ENCODE measurements at regions of chr4 and their contacts with region 1.

Region 1: DNA sequence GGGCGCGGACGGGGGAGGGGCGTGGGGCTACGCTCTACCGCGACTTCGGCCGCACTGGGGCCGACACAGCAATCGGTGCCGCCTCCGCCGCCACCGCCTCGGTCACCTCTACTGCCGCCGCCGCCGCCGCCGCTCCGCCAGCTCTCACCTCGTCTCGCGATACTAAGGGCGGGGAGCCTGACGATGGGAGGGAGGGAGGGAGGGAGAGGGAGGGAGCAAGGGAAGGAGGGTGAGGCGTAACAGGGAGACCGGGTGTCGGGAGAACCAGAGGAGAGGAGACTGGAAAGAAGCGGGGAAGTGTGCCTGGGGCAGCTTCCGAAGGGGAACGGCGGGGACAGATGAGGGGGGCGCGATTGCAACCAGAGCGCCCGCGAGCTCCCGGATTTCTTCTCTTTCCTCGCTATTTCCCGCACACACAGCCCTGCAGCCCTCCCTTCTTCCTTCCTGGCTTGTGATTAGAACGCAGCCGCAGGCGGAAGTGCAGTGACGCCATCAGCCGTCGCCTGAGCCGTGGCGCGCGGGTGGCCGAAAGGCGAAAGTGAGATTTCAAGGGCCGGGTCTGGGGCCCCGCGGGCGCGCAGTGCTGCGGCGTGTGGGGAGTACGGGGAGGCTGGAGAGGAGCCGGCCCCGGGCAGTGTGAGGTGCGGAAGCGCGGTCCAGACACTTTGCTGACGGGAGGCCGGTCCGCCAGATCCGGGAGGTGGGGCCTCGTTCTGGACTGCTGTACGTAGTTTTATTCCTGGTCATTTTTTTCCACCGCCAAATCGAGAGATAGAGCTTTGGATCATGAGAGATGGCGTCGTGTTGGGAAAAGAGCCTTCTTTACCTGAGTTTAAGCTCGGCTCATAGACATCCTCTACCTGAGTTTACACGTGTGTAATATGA is at the start of gene ANKRD17:
- DNase-seq: peak; percentile 97
- H3K4me3 ChIP-seq: peak within 1 kb of the TSS; percentile 80 to 98 (median 86)
- H3K27ac ChIP-seq: peak within 1 kb of the TSS; percentile 94 to 98 (median 96)
- H3K4me1 ChIP-seq: peaks cover 46 to 58% (median 54%) of the 10 kb centered on the region in 4 donors
- H3K27me3 ChIP-seq: no peaks in the 10 kb centered on the region
- CTCF ChIP-seq: peak in 2 of 3 experiments; percentile 16 to 43
- EP300 ChIP-seq: peak; percentile 17
- POLR2A ChIP-seq: peak; percentile 61
- total RNA-seq, gene ANKRD17: 47.9 to 58.1 (median 54.7) TPM

Region 2: DNA sequence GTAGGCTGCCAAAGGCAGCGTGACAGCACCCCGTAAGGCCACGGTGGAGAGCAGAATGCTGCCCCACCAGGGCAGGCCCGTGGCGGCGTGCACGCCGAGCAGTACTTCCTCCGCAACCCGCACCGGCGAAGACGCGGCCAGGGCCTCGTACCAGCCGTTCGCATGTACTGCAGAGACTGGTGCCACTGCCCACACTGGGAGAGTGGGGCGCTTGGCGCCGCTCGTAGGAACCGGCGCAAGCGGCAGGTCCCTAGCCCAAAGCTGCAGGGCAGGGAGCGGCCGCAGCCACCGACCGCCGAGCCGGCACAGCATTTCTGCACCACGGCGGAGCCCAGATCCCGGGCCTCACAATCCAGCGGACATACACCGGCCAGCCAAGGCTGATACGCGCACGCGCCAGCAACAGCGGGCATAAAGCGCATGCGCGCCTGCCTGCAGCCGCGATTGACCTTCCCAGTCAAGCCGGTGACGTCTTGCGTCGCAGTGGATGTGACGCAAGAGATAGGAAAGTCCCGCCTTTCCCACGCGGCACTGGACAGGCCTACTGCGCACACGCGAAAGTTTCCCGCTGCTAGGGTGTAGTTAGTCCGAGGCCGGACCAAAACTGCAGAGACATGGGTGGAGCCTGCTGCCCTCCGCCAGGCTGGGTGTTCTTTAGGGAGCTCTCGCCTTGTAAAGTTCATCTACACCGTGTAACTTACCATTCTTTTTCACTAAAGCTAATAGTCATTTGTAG is 189.4 kb before region 1 on chr4 and contains the start of gene COX18:
- intact Hi-C with region 1: loop called (anchors 2 kb)
- DNase-seq: peak; percentile 99
- H3K4me3 ChIP-seq: peak within 1 kb of the TSS; percentile 72 to 91 (median 82)
- H3K27ac ChIP-seq: peak within 1 kb of the TSS; percentile 91 to 97 (median 95)
- H3K4me1 ChIP-seq: peaks cover 0 to 29% (median 28%) of the 10 kb centered on the region in 4 donors
- H3K27me3 ChIP-seq: no peaks in the 10 kb centered on the region
- CTCF ChIP-seq: peak in 1 of 3 experiments; percentile 4
- EP300 ChIP-seq: no peak
- POLR2A ChIP-seq: peak; percentile 78
- total RNA-seq, gene COX18: 10.4 to 19.0 (median 12.9) TPM

Region 3: GRCh38 chr4:73142995-73143547 is 115.9 kb before region 1 on chr4:
- intact Hi-C with region 1: loop called (anchors 5 kb)
- DNase-seq: no peak
- H3K4me3 ChIP-seq: no peak overlapping the region
- H3K27ac ChIP-seq: no peak overlapping the region
- H3K4me1 ChIP-seq: no peaks in the 10 kb centered on the region
- H3K27me3 ChIP-seq: no peaks in the 10 kb centered on the region
- CTCF ChIP-seq: peak in 1 of 3 experiments; percentile 16
- EP300 ChIP-seq: no peak
- POLR2A ChIP-seq: no peak

Region 4: DNA sequence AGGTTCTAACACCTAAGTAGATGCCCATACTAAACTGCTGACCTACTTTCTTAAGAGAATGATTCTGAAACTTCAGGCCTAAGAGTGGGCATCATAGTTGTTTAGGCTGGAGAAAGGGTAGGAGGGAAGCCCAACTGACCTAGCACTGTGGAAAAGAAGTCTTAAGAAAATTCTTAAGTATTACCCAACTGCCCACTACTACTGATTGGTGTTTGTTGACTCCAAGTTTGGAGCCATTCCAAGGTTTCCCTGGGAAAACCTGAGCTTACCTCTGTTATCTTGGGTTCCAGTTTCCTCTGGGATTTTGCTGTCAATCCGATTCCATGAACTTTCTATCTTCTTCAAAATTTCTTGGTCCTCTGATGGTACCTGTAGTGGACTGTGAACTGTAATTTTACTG is 24.2 kb before region 1 on chr4:
- intact Hi-C with region 1: no loop called
- DNase-seq: no peak
- H3K4me3 ChIP-seq: no peak overlapping the region
- H3K27ac ChIP-seq: no peak overlapping the region
- H3K4me1 ChIP-seq: peaks cover 0 to 23% (median 16%) of the 10 kb centered on the region in 4 donors
- H3K27me3 ChIP-seq: no peaks in the 10 kb centered on the region
- CTCF ChIP-seq: no peak
- EP300 ChIP-seq: no peak
- POLR2A ChIP-seq: no peak